CD4-positive, alpha-beta memory T cell (primary cell): ENCODE measurements at regions of chr2 and their contacts with region 1.

Region 1: GRCh38 chr2:207710814-207711740 is at the start of gene CCNYL1:
- DNase-seq: peak; percentile 96 to 99 (median 98)
- H3K4me3 ChIP-seq: peak within 1 kb of the TSS; percentile 70 to 88
- H3K4me3 Mint-ChIP-seq: peak within 1 kb of the TSS; percentile 90 to 98 (median 96)
- H3K27ac ChIP-seq: peak within 1 kb of the TSS; percentile 73
- H3K27ac Mint-ChIP-seq: peak within 1 kb of the TSS; percentile 92 to 96 (median 94)
- H3K4me1 ChIP-seq: peaks cover 20% of the 10 kb centered on the region
- H3K4me1 Mint-ChIP-seq: peaks cover 14 to 37% (median 21%) of the 10 kb centered on the region in 4 donors
- H3K27me3 ChIP-seq: no peaks in the 10 kb centered on the region
- H3K27me3 Mint-ChIP-seq: peaks cover 0 to 1% of the 10 kb centered on the region in 2 donors
- total RNA-seq, gene CCNYL1: 9.7 to 10.5 TPM

Region 2: DNA sequence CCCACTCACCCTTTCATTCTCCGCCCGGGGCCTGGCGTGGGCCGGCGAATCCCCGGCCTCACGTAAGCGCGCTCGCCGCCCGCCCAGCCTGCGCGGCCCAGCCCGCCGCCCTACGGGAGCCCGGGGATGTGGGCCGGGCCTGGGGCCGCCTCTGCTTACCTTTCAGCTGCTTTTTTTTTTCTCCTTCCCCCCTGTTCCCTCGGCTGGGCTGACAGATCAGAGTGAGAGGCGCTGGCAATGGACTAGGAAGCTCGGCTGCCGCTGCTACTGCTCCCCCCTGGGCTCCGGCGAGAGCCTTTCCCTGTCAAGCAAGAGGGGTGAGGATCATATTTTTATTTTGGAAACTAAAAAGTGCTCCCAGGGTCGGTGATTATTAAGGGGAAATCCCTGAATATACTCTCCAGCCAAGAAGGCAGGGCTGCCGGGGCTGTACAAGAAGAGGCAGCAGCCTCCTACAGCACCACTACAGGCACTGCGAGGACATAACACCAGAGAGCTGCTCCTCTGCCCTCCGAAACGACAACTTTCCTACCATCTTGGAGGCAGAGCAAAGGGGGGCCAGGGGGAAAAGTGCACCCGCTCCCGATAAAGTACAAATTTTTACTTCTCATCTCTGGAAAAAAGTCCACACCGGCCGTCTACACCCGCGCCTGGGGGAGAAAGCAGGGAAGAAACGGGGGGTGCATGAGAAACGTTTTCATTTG is 1625.2 kb before region 1 on chr2 and contains the start of gene INO80D:
- CTCF ChIA-PET with region 1: no interaction called
- POLR2A ChIA-PET with region 1: interaction called, 8 read pairs
- intact Hi-C with region 1: loop called (anchors 2 kb)
- DNase-seq: peak; percentile 88 to 91 (median 89)
- H3K4me3 ChIP-seq: peak within 1 kb of the TSS; percentile 81 to 94
- H3K4me3 Mint-ChIP-seq: peak within 1 kb of the TSS; percentile 98 to 100 (median 99)
- H3K27ac ChIP-seq: peak within 1 kb of the TSS; percentile 98
- H3K27ac Mint-ChIP-seq: peak within 1 kb of the TSS; percentile 99 to 100 (median 100)
- H3K4me1 ChIP-seq: peaks cover 44% of the 10 kb centered on the region
- H3K4me1 Mint-ChIP-seq: peaks cover 24 to 54% (median 37%) of the 10 kb centered on the region in 4 donors
- H3K27me3 ChIP-seq: no peaks in the 10 kb centered on the region
- H3K27me3 Mint-ChIP-seq: no peaks in the 10 kb centered on the region
- total RNA-seq, gene INO80D: 40.2 to 41.3 TPM

Region 3: DNA sequence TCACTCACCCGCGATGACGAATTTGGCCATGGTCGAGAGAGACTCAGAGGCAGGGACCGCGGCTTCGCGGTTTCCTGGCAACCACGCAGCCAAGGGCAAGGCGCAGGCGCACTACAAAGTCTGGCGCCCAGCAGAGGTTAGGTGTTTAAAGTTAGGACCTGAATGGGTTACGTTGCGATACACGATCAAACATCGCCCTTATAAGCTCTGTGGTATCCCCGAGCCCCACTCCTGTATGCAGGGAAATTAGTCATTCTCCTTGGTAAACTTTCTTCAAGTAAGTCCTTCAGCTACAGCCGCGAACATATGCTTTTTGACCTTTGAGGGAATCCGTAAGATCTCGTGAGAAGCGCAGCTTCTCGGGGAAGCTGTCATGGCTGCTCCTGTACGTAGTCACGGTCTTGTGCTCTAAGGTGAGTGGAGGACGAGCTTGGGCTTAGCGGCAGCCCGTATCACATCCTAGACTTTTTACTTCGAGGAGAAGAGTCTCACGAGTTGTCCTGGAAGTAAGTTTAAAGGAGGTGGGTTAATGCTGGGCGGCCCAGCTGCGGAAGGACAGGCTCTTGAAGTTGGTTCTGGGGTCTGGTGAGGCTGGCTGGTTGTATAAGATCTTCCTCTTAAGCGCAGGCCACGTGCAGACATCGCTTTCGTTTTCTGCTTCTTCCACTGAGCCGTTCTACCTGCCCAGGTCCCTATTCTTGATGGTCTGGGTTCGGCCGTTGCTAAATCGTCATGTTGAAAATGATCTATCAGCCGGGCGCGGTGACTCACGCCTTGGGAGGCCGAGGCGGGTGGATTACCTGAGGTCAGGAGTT is 945.6 kb before region 1 on chr2 and contains the starts of genes FASTKD2 and MDH1B:
- CTCF ChIA-PET with region 1: no interaction called
- POLR2A ChIA-PET with region 1: interaction called, 3 read pairs
- intact Hi-C with region 1: loop called (anchors 10 kb)
- DNase-seq: peak; percentile 88 to 91 (median 89)
- H3K4me3 ChIP-seq: peak within 1 kb of the TSS; percentile 54 to 82
- H3K4me3 Mint-ChIP-seq: peak within 1 kb of the TSS; percentile 89 to 98 (median 95)
- H3K27ac ChIP-seq: peak within 1 kb of the TSS; percentile 91
- H3K27ac Mint-ChIP-seq: peak within 1 kb of the TSS; percentile 96 to 99 (median 97)
- H3K4me1 ChIP-seq: peaks cover 39% of the 10 kb centered on the region
- H3K4me1 Mint-ChIP-seq: peaks cover 20 to 45% (median 36%) of the 10 kb centered on the region in 4 donors
- H3K27me3 ChIP-seq: no peaks in the 10 kb centered on the region
- H3K27me3 Mint-ChIP-seq: no peaks in the 10 kb centered on the region
- total RNA-seq, gene FASTKD2: 23.0 to 23.4 TPM
- total RNA-seq, gene MDH1B: 0.17 TPM in 1 of 2 experiments, not detected in the other

Region 4: DNA sequence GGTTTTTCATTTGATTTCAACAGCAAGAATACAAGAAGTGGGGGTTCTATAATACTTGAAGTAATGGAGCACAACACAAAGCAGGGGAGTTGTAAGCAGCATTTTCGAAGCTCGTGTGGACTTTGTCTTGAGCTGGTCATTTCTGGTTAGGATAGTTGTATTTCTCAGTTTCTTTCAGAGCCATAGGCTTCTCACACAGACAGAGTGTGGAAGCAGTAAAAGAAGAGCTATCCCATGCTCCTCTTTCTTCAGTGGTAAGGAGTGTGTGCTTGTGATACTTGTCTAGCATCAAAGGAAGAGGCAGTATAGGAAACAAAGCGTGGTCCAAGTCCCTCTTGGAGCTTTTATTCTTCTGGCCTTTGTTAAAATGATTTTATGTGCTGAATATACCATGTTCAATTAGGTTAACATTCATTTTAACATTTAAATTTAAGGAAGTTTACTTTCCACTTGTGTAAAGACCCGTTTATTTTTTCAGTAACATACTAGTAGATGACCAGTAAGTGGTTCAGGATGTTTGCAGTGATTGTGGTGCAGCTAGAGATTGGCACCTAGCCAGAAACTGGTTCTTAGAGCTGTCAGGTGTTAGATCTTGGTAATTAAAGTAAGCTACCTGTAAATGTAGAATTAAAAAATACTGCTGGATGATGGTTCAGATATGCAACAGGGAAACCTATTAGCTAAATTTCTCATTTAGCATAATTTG is 14.9 kb after region 1 on chr2:
- CTCF ChIA-PET with region 1: interaction called, 8 read pairs
- POLR2A ChIA-PET with region 1: interaction called, 11 read pairs
- intact Hi-C with region 1: no loop called
- DNase-seq: peak in 3 of 5 donors; percentile 13 to 28 (median 27)
- H3K4me3 ChIP-seq: no peak overlapping the region
- H3K4me3 Mint-ChIP-seq: no peak overlapping the region
- H3K27ac ChIP-seq: no peak overlapping the region
- H3K27ac Mint-ChIP-seq: peak overlapping the region in 3 of 7 donors; percentile 29 to 83 (median 70)
- H3K4me1 ChIP-seq: peaks cover 18% of the 10 kb centered on the region
- H3K4me1 Mint-ChIP-seq: peaks cover 24 to 36% (median 27%) of the 10 kb centered on the region in 4 donors
- H3K27me3 ChIP-seq: no peaks in the 10 kb centered on the region
- H3K27me3 Mint-ChIP-seq: no peaks in the 10 kb centered on the region

Region 5: DNA sequence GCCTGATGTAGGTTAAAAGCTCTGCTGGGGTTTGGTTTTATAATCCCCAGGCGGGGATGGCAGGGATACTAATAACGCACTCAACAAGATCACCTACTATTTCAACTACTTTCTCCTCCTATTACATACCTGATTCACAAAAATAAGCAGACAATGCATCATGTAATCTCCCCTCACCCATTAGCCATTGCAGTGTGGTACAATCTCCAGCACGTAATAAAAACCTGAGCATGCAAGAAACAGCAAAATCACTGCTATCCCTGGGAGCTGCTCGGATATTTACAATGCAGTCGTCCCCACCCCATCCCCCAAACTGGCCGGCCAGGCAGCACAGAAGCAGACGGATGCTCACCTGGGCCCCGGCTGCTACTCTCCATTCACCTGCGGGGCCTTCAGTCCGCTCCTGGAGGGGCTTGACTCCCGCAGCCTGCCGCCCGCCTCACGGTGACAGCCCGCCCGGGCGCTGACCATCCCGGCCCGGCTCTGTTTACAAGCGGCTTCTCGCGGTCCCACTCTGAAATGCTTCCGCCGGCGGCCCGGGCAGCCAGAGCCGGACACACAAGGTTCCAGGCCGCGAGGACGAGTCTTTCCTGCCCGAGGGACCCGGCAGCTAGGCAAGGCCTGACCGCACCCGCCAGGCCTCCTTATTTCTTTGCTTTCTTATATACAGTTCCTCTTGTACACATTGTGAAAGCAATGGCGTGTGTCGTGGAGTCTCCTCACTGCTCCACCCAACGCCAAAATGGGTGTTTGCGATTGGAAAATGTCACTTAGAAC is 314.1 kb after region 1 on chr2 and contains the start of gene PLEKHM3:
- CTCF ChIA-PET with region 1: no interaction called
- POLR2A ChIA-PET with region 1: interaction called, 12 read pairs
- intact Hi-C with region 1: loop called (anchors 1 kb)
- DNase-seq: peak; percentile 43 to 69 (median 61)
- H3K4me3 ChIP-seq: peak within 1 kb of the TSS; percentile 83 to 92
- H3K4me3 Mint-ChIP-seq: peak within 1 kb of the TSS; percentile 90 to 98 (median 93)
- H3K27ac ChIP-seq: peak within 1 kb of the TSS; percentile 71
- H3K27ac Mint-ChIP-seq: peak within 1 kb of the TSS; percentile 45 to 96 (median 95)
- H3K4me1 ChIP-seq: peaks cover 14% of the 10 kb centered on the region
- H3K4me1 Mint-ChIP-seq: peaks cover 14 to 28% (median 19%) of the 10 kb centered on the region in 4 donors
- H3K27me3 ChIP-seq: no peaks in the 10 kb centered on the region
- H3K27me3 Mint-ChIP-seq: no peaks in the 10 kb centered on the region
- total RNA-seq, gene PLEKHM3: 14.7 to 16.1 TPM

Region 6: DNA sequence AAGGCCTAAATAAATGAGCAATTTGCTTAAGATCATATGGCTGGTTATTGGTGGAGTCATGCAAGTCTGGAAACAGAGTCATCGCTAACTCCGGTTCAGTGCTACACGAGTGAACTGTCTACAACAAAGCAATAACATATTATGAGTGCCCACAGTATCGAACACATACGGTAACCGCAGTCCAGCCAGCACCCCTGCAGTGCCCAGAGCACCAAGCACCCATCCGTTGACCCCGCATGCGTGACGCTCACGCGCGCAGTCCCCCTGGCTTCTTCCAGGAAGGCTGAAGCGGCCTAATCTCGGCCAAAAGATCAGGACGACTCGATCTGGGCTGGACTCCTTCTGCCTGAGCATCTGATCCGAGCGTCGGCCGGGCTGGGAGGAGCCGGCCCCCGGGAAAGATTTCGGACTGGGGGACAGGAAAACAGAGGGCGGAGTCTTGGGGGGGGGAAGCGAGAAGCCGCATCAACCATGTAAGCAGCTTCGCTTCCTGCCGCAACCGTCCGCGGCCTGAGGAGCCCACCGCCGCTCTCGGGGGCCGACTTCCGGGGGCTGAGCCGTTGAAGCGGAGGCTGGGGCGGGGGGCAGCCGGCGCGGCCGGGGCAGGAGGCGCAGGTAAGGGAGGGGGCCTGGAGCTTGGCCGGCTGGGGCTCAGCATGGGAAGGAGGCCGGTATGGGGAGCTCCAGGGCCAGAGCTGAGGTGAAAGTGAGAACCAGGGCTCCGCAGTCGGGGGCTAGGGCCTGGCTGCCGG is 554.9 kb after region 1 on chr2 and contains the start of gene PIKFYVE:
- CTCF ChIA-PET with region 1: no interaction called
- POLR2A ChIA-PET with region 1: interaction called, 4 read pairs
- intact Hi-C with region 1: loop called (anchors 5 kb)
- DNase-seq: peak; percentile 80 to 92 (median 87)
- H3K4me3 ChIP-seq: peak within 1 kb of the TSS; percentile 51 to 95
- H3K4me3 Mint-ChIP-seq: peak within 1 kb of the TSS; percentile 92 to 99 (median 96)
- H3K27ac ChIP-seq: peak within 1 kb of the TSS; percentile 75
- H3K27ac Mint-ChIP-seq: peak within 1 kb of the TSS; percentile 86 to 97 (median 95)
- H3K4me1 ChIP-seq: peaks cover 46% of the 10 kb centered on the region
- H3K4me1 Mint-ChIP-seq: peaks cover 27 to 60% (median 39%) of the 10 kb centered on the region in 4 donors
- H3K27me3 ChIP-seq: no peaks in the 10 kb centered on the region
- H3K27me3 Mint-ChIP-seq: no peaks in the 10 kb centered on the region
- total RNA-seq, gene PIKFYVE: 44.5 to 45.8 TPM